Gastrocnemius medialis (tissue), 4 donors: ENCODE measurements at regions of chr7 and their contacts with region 1.

Region 1: GRCh38 chr7:134632937-134633540 is 13.6 kb upstream of the BPGM start:
- DNase-seq: no peak
- ATAC-seq: peak; percentile 49 to 52
- H3K4me3 ChIP-seq: no peak overlapping the region
- H3K27ac ChIP-seq: no peak overlapping the region
- H3K4me1 ChIP-seq: peaks cover 0 to 4% of the 10 kb centered on the region in 2 donors
- H3K27me3 ChIP-seq: no peaks in the 10 kb centered on the region
- CTCF ChIP-seq: peak; percentile 30 to 58 (median 48)
- POLR2A ChIP-seq: no peak

Region 2: GRCh38 chr7:134750083-134751062 is 117.3 kb after region 1 on chr7:
- in situ Hi-C with region 1: no loop called
- intact Hi-C with region 1: loop called (anchors 10 kb)
- DNase-seq: peak in 1 of 2 donors; percentile 15
- ATAC-seq: no peak
- H3K4me3 ChIP-seq: no peak overlapping the region
- H3K27ac ChIP-seq: no peak overlapping the region
- H3K4me1 ChIP-seq: no peaks in the 10 kb centered on the region
- H3K27me3 ChIP-seq: no peaks in the 10 kb centered on the region
- CTCF ChIP-seq: peak; percentile 12 to 58 (median 38)
- POLR2A ChIP-seq: no peak

Region 3: GRCh38 chr7:134954197-134955082 is 321.4 kb after region 1 on chr7:
- in situ Hi-C with region 1: loop called in 1 of 4 experiments (anchors 10 kb)
- intact Hi-C with region 1: loop called (anchors 1 kb)
- DNase-seq: no peak
- ATAC-seq: peak in 1 of 2 donors; percentile 46
- H3K4me3 ChIP-seq: no peak overlapping the region
- H3K27ac ChIP-seq: no peak overlapping the region
- H3K4me1 ChIP-seq: no peaks in the 10 kb centered on the region
- H3K27me3 ChIP-seq: no peaks in the 10 kb centered on the region
- CTCF ChIP-seq: peak; percentile 25 to 53 (median 41)
- POLR2A ChIP-seq: no peak